OCI-LY7 (cell line): ENCODE measurements at regions of chr7 and their contacts with region 1.

Region 1: DNA sequence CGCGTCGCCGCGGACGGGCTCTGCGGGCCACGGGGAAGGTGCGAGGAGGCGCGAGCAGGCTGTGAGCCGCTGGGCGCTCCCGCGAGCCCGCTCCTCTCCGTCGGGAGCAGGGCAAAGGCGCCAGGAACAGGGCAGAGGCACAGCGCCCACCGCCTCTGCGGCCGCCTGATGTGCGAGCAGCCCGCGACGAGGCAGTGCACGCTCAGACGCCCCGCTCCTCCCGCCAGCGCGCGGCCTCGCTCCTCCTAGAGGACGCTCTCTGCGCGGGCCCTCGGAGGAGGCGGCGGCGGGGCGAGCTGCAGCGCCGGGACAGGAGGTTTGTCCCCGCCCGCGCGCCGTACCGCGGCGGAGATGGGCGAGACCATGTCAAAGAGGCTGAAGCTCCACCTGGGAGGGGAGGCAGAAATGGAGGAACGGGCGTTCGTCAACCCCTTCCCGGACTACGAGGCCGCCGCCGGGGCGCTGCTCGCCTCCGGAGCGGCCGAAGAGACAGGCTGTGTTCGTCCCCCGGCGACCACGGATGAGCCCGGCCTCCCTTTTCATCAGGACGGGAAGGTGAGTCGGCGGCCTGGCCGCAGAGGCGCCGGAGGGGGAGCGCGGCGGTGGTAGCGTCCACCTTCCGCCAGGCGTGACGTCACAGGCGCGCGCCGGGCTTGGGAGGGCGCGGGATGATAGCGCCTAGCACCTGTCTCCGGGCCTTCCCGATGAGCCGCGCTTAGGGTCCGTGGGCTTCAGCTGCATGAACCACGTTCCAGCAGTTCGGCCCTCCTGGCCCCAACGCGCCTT is 731 bp downstream of the LANCL2 start:
- DNase-seq: peak; percentile 96
- H3K4me3 ChIP-seq: peak overlapping the region; percentile 82
- H3K27ac ChIP-seq: peak overlapping the region; percentile 78
- H3K4me1 ChIP-seq: peaks cover 19% of the 10 kb centered on the region
- CTCF ChIP-seq: 0 out of 2 replicates have a peak, but pooled peaks have one; percentile 36

Region 2: GRCh38 chr7:53940483-53940882 is 1425.4 kb before region 1 on chr7:
- CTCF ChIA-PET with region 1: no interaction called
- POLR2A ChIA-PET with region 1: no interaction called
- intact Hi-C with region 1: no loop called
- DNase-seq: no peak
- H3K4me3 ChIP-seq: no peak overlapping the region
- H3K27ac ChIP-seq: no peak overlapping the region
- H3K4me1 ChIP-seq: no peaks in the 10 kb centered on the region
- CTCF ChIP-seq: no peak

Region 3: DNA sequence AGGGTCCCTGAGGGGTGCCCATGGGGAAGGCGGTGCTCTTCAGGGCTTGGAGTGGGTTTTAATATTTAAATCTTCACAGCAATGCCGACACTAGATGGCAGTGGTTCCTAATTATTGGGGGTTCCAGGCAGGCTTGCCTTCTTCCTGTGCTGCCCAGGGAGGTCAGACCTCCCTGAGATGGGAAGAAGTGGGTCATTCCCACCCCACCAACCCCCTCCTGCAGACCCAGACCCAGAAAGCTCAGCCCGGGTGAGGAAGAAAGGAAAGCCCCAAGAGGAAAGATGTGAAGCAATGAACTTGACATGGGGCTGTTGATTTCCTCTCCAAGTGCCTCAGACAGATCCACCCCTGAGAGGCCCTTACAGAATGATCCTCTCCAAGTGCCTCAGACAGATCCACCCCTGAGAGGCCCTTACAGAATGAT is 85.8 kb before region 1 on chr7:
- CTCF ChIA-PET with region 1: no interaction called
- POLR2A ChIA-PET with region 1: no interaction called
- intact Hi-C with region 1: loop called (anchors 5 kb)
- DNase-seq: peak; percentile 76
- H3K4me3 ChIP-seq: no peak overlapping the region
- H3K27ac ChIP-seq: no peak overlapping the region
- H3K4me1 ChIP-seq: no peaks in the 10 kb centered on the region
- CTCF ChIP-seq: peak; percentile 83

Region 4: DNA sequence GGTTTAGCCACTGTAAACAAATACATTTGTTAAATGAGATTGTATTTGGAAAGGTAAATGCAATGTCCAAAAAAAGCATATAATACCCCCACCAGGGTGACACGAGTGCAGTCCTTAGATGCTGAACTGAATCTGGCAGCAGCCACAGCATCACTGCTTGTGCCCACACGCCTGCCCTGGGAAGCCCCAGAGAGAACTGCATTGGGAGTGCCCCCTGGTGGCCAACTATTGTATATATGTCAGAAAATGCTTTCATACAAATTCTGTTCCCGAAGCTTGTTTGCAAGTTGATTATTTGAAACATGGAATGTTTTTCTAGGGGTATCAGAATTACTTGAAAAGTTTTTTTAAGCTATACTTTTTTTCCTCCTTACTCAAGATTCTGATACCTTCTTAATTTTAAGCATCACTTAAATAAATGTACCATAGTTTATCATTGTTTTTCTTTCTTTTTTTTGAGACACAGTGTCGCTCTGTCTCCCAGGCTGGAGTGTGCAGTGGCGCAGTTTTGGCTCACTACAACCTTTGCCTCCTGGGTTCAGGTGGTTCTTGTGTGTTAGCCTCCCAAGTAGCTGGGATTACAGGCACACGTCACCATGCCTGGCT is 49.4 kb after region 1 on chr7:
- CTCF ChIA-PET with region 1: no interaction called
- POLR2A ChIA-PET with region 1: interaction called, 11 read pairs
- intact Hi-C with region 1: no loop called
- DNase-seq: peak; percentile 84
- H3K4me3 ChIP-seq: no peak overlapping the region
- H3K27ac ChIP-seq: no peak overlapping the region
- H3K4me1 ChIP-seq: no peaks in the 10 kb centered on the region
- CTCF ChIP-seq: peak; percentile 93

Region 5: DNA sequence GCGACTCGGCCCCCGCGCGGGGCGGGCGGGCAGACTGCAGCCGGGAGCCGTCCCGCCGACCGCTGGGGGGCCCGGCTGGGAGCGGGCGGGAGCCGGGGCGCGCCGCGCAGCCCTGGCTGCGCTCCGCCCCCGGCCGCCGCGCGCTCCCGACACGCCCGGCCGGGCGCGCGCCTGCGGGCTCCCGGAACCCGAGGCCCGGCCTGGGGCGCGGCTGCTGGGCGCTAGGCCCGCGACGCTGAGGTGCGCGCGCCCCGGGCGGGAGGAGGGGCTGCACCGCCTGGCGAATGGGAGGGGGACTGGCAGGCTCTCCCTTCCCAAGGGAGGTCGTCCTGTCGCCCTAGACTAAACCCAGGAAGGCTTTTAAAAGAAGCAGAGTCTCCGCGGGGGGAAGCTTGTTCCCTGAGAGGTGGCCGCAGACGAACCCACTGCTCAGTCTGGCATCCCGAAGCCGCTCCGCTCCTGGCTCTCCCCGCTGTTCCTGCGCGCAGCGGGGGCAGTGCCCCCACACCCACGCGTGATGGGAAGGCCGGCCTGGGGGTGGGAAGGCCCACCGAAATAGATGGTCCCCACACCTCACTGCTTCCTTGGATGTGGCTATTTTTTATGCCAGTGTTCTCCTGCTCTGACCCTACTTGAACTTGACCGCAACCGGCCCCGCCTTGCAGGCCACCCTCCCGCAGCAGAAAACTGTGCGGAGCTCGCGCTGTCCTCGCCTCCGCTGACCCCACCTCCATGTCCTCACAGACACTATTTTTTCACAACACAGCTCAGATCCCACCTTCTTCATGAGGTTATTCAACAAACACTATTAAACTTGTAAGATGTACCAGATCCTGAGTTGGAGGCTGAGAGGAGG is 206.7 kb after region 1 on chr7 and contains the start of gene VOPP1:
- CTCF ChIA-PET with region 1: no interaction called
- POLR2A ChIA-PET with region 1: no interaction called
- intact Hi-C with region 1: loop called (anchors 2 kb)
- DNase-seq: peak; percentile 87
- H3K4me3 ChIP-seq: peak within 1 kb of the TSS; percentile 95
- H3K27ac ChIP-seq: peak within 1 kb of the TSS; percentile 60
- H3K4me1 ChIP-seq: peaks cover 48% of the 10 kb centered on the region
- CTCF ChIP-seq: no peak
- total RNA-seq, gene VOPP1: 66.9 and 68.8 TPM in 2 replicates

Region 6: DNA sequence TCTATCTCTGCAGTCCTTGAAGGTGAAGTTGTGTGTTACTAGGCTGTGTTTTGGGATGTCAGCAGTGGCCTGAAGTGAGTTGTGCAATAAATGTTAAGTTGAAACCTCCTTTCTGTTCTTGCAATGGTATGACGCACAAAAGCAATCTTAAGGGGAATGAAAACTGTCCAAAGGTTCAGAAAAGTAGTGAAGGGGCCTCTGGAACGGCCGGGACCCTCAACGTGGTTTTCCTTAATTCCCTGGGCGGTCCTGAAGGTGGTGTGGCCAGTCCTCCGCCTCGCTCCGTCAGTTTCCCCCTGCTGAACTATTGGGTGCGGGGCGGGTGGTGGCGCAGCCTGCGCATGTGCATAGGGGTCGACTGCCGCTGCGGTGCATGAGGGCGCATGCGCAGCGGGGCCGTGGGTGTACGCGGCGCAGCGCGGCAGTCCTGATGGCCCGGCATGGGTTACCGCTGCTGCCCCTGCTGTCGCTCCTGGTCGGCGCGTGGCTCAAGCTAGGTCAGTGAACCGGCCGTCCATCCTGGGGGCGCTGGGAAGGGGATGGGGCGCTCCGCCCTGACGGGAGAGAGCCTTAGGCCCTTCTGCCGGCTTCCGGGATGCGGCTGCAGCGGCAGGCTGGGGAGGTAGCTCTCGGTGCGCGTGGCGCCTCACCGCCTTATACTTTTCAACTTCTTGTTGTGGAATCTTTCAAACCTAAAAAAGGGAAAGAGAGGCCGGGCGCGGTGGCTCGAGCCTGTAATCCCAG is 698.2 kb after region 1 on chr7 and contains the start of gene SUMF2:
- CTCF ChIA-PET with region 1: no interaction called
- POLR2A ChIA-PET with region 1: no interaction called
- intact Hi-C with region 1: loop called (anchors 10 kb)
- DNase-seq: peak; percentile 93
- H3K4me3 ChIP-seq: peak within 1 kb of the TSS; percentile 91
- H3K27ac ChIP-seq: peak within 1 kb of the TSS; percentile 79
- H3K4me1 ChIP-seq: peaks cover 26% of the 10 kb centered on the region
- CTCF ChIP-seq: 0 out of 2 replicates have a peak, but pooled peaks have one; percentile 31
- total RNA-seq, gene SUMF2: 46.4 and 60.8 TPM in 2 replicates